ENCODE measurements at regions of chr5 and their contacts with region 1.

Region 1: DNA sequence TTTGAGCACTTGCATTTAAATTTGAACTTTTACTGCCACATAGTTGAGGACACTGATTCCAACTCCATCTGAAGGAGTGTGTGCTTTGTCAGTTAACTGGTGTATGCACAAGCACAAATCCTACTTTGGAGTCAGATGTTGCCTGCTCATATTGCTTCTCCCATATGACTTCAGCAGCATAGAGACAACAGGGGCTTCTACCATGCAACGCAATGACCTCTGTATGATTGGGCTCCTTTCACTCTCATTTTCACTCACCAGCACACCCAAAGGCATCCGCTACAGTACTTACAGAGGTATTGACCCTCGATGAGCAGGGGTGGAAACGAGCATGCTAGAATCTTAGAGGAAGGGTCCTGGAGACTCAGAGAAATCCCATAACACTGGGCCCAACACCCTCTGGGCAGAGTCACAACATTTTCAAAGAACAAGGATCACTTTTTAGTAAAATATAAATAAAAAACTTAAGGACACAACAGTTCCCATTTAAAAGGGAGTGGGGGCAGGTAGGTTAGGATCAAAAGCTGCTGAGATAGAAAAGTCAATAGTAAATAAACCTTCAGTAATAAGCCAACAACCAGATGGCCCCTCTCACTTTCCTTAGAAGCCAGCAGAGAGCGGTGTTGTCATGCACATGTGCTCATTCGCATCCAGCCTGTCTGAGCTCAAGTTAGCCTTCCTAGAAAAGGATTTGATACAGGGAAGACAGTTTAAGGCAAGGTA is 203.8 kb downstream of the SNCAIP start:
- DNase-seq: peak; percentile 45
- CTCF ChIP-seq: peak; percentile 67

Region 2: DNA sequence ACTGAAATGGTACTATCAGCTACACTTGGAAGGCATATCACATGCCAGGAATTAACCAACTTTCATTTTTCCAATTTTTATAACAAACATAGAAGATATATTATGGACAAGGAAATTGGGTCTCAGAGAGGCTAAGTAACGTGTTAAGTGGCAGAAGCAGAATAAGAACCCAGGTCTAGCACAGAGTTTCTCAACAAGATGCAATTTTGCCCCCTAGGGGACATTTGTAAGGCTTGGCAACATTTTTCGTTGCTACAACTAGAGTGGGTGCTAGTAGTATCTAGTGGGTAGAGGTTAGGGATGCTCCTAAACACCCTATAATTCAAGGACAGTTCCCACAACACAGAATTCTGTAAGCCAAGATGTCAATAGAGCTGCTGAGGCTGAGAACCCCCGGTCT is 23.2 kb before region 1 on chr5:
- CTCF ChIA-PET with region 1: no interaction called
- POLR2A ChIA-PET with region 1: no interaction called
- DNase-seq: no peak
- CTCF ChIP-seq: peak; percentile 17

Region 3: DNA sequence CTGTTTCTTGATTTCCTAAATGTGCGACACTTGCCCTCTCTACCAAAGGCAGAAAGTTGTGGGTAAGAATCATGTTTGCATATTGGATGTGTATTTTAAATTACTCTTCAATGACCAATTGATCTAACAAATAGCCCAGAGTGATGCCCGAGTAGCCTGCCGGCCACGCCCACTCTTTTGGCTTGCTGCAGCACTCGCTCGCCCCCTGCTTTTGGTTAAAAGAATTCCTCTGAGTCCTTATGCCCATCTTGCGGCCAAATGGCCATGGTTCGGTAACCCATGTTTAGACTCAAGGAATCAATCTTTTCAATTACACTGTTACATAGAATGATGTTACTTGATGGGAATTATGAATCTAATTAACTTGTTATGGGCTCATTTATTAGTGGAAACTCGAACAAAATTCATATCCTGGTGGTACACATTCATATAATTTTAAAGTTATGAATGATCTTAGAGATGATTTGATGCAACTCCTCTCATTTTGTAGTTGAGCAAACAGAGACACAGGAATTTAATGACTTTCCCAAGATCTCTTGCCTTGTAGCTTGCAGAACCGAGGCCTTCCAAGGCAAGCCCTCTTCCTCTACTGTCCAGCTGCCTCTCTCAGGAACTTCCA is 484.2 kb after region 1 on chr5:
- CTCF ChIA-PET with region 1: interaction called, 15 read pairs
- POLR2A ChIA-PET with region 1: no interaction called
- DNase-seq: peak; percentile 76
- CTCF ChIP-seq: peak; percentile 60

Measured in GM10248 (cell line).